Adrenal gland (tissue), 19 donors: ENCODE measurements at regions of chr9 and their contacts with region 1.

Region 1: DNA sequence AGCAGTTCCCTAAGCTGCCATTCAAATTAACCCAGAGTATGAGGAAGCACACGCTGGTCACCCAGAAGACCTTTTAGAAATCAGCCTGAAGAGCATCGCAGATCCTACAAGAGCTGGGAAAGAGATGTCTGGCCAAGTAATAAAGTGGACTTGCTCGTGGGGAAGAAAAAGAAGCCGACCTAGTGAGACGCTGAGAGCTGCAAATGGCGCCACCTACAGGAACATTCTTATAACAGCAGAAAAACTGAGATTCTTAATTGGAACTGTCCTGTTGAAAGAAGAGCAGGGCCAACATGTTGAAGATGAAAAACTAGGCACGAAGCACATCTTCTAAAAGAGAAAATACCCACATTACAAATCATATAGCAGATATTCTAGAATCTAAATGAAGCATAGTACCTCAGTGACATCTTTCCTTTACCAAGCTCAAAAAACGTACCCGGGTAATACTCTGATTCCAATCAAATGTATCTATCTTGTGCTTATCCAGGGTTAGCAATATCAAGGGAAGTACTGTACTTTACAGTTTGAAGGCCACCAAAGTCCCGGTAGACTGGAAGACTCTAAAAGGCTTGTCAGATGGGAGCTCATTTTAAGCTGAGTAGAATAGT is 3.9 kb upstream of the GNAQ start:
- DNase-seq: peak; percentile 53 to 84 (median 66)
- H3K4me3 ChIP-seq: no peak overlapping the region
- H3K27ac ChIP-seq: peak overlapping the region in 1 of 5 donors; percentile 2
- H3K4me1 ChIP-seq: peaks cover 0 to 8% of the 10 kb centered on the region in 2 donors
- H3K27me3 ChIP-seq: no peaks in the 10 kb centered on the region
- CTCF ChIP-seq: peak; percentile 85 to 90 (median 87)
- POLR2A ChIP-seq: no peak

Region 2: GRCh38 chr9:77456829-77457437 is 578.6 kb before region 1 on chr9:
- intact Hi-C with region 1: loop called in 1 of 2 experiments (anchors 10 kb)
- DNase-seq: peak; percentile 81 to 96 (median 88)
- H3K4me3 ChIP-seq: no peak overlapping the region
- H3K27ac ChIP-seq: no peak overlapping the region
- H3K4me1 ChIP-seq: no peaks in the 10 kb centered on the region
- H3K27me3 ChIP-seq: no peaks in the 10 kb centered on the region
- CTCF ChIP-seq: peak; percentile 82 to 95 (median 85)
- POLR2A ChIP-seq: no peak

Region 3: DNA sequence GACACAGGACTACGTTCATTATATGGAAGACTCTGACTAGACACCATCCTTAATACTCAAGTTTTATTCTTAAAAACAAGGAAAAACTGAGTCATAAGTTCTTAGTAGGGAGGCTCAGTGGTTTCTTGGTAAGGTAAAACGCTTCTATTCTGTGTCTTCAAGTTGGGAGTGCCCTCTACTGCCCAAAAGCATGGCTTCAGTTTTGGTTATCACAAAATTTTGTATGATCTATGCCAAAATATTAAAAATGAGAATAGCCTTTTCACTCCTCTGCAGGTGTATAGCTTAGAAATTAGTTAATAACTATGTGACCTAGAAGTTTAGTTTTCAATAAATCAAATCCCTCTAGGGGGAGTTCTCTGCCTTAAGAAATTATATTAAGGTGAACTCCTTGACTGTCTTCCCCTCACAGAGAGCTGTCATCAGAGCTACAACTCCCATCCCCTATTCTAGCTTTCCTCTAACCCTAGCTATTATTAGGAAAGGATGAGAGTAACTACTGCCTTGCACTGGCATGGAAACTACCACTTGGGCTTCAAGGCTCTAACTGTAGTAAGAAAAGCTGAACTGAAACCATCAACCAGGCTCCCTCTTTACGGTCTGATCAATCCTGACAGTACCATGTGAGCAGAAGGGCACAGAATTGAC is 193.6 kb before region 1 on chr9:
- intact Hi-C with region 1: loop called in 1 of 2 experiments (anchors 10 kb)
- DNase-seq: no peak
- H3K4me3 ChIP-seq: no peak overlapping the region
- H3K27ac ChIP-seq: no peak overlapping the region
- H3K4me1 ChIP-seq: peaks cover 4 to 23% of the 10 kb centered on the region in 2 donors
- H3K27me3 ChIP-seq: no peaks in the 10 kb centered on the region
- CTCF ChIP-seq: peak; percentile 21 to 43 (median 31)
- POLR2A ChIP-seq: no peak

Region 4: GRCh38 chr9:77926309-77926959 is 109.1 kb before region 1 on chr9:
- intact Hi-C with region 1: loop called in 1 of 2 experiments (anchors 10 kb)
- DNase-seq: no peak
- H3K4me3 ChIP-seq: no peak overlapping the region
- H3K27ac ChIP-seq: peak overlapping the region in 2 of 5 donors; percentile 22 to 64
- H3K4me1 ChIP-seq: peaks cover 14 to 42% of the 10 kb centered on the region in 2 donors
- H3K27me3 ChIP-seq: no peaks in the 10 kb centered on the region
- CTCF ChIP-seq: no peak
- POLR2A ChIP-seq: no peak

Region 5: GRCh38 chr9:77977210-77977611 is 58.3 kb before region 1 on chr9:
- intact Hi-C with region 1: loop called (anchors 5 to 10 kb)
- DNase-seq: peak; percentile 49 to 86 (median 66)
- H3K4me3 ChIP-seq: no peak overlapping the region
- H3K27ac ChIP-seq: no peak overlapping the region
- H3K4me1 ChIP-seq: peaks cover 21 to 63% of the 10 kb centered on the region in 2 donors
- H3K27me3 ChIP-seq: no peaks in the 10 kb centered on the region
- CTCF ChIP-seq: peak; percentile 14 to 72 (median 52)
- POLR2A ChIP-seq: no peak